ENCODE measurements at regions of chr10 and their contacts with region 1.

Region 1: GRCh38 chr10:17290226-17290625 is 62.2 kb downstream of the VIM start:
- DNase-seq: peak; percentile 50
- ATAC-seq: peak; percentile 88
- H3K4me3 ChIP-seq: no peak overlapping the region
- H3K27ac ChIP-seq: no peak overlapping the region
- H3K4me1 ChIP-seq: peaks cover 0 to 9% of the 10 kb centered on the region in 2 experiments; a peak in 2 of 4 replicates
- H3K27me3 ChIP-seq: no peaks in the 10 kb centered on the region
- CTCF ChIP-seq: peak; percentile 38 to 68 (median 66)
- POLR2A ChIP-seq: no peak
- RAD21 ChIP-seq: peak; percentile 87

Region 2: DNA sequence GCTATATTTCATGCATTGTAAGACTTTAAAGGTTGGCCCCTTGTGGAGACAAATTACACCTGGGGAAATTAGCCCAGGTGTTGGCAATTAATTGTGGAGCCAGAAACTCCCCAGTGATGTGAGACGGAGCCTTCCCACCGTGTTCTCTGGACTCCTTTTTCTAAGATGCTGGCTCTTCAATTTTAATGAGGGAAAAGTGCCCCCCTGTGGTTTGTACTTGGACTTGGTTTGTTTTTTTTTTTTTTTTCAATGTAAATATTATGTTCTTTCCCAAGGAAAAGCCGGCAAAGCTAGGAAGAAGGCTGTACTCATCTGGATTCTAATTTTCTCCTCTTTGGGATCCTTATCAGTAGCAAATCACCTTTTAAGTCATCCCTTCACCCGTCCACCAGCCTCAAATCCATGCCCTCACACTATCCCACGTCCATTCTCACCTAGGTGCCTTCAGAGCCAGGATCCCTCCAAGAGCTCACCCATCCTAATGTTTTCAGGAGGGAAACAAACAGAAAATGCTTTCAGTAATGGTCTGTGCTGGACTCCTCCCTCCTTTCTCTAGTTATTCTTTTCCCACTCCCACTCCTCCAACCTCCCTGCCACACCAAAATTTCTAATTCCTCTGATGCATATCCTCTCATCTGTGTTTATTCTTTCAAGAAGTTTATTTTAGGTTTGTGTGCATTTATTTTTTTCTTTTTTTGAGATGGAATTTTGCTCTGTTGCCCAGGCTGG is 184.5 kb after region 1 on chr10:
- CTCF ChIA-PET with region 1: interaction called, 12 read pairs
- POLR2A ChIA-PET with region 1: no interaction called
- RAD21 ChIA-PET with region 1: no interaction called
- intact Hi-C with region 1: loop called (anchors 1 kb)
- DNase-seq: peak; percentile 21
- ATAC-seq: peak; percentile 50; the same call in 1 of the 2 replicates
- H3K4me3 ChIP-seq: no peak overlapping the region
- H3K27ac ChIP-seq: no peak overlapping the region
- H3K4me1 ChIP-seq: peaks cover 0 to 7% of the 10 kb centered on the region in 2 experiments; a peak in 2 of 4 replicates
- H3K27me3 ChIP-seq: no peaks in the 10 kb centered on the region
- CTCF ChIP-seq: peak in 2 of 3 experiments; percentile 28 to 45; a peak in 3 of 6 replicates
- POLR2A ChIP-seq: no peak
- RAD21 ChIP-seq: peak; percentile 60

Measured in HCT116 (cell line).